A673 (cell line): ENCODE measurements at regions of chr15 and their contacts with region 1.

Region 1: DNA sequence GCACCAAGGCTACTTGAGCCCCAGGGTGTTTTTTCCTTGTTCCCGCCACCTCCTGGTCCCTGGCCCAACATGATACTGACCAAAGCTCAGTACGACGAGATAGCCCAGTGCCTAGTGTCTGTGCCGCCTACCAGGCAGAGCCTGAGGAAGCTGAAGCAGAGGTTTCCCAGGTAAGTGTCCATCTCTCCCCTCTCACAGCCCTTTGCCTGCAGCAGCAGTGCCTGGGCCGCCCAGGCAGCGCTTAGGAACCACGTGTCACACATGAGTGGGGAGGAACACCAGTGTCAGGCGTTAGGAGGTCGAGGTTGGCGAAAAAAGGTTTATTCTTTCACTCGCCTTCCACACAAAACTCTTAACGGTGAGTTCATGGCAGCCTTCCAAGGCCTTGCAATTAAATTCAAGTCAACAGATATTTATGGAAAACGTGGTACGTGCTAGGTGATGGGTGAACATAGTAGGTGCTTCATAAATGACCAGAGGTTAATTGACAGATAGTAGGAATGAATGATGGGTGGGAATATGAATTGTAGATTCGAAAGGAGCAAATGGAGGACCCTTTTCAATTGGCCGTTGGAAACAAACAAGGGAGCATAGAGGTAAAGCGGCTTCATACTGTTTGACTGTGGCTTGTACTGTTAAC is 486 bp downstream of the CDIN1 start:
- DNase-seq: no peak
- H3K4me3 ChIP-seq: peak overlapping the region; percentile 66
- H3K27ac ChIP-seq: peak overlapping the region; percentile 82
- H3K4me1 ChIP-seq: no peaks in the 10 kb centered on the region
- H3K27me3 ChIP-seq: no peaks in the 10 kb centered on the region
- CTCF ChIP-seq: no peak

Region 2: DNA sequence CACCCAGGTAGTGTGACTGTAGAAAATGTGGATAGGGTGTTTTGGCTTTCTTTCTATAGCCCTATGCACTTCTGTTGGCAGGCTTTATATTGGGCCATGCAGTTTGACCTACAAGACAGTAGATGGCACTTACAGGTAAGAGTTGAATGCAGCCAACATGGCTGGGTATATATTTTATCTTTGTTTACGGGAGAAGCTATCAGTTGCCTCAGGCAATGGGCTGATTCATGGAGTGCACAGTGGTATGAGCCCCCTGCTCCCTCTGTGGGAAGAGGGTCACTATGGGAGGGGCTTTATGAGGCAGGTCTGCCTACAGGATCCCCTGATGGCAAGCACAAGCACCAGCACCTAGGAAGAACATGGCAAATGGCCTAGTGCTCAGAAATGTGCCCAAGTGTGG is 301.7 kb before region 1 on chr15:
- CTCF ChIA-PET with region 1: no interaction called
- POLR2A ChIA-PET with region 1: no interaction called
- intact Hi-C with region 1: loop called (anchors 10 kb)
- DNase-seq: peak; percentile 23
- H3K4me3 ChIP-seq: no peak overlapping the region
- H3K27ac ChIP-seq: no peak overlapping the region
- H3K4me1 ChIP-seq: no peaks in the 10 kb centered on the region
- H3K27me3 ChIP-seq: peaks cover 11% of the 10 kb centered on the region
- CTCF ChIP-seq: peak; percentile 43; the same call in 1 of the 2 replicates

Region 3: DNA sequence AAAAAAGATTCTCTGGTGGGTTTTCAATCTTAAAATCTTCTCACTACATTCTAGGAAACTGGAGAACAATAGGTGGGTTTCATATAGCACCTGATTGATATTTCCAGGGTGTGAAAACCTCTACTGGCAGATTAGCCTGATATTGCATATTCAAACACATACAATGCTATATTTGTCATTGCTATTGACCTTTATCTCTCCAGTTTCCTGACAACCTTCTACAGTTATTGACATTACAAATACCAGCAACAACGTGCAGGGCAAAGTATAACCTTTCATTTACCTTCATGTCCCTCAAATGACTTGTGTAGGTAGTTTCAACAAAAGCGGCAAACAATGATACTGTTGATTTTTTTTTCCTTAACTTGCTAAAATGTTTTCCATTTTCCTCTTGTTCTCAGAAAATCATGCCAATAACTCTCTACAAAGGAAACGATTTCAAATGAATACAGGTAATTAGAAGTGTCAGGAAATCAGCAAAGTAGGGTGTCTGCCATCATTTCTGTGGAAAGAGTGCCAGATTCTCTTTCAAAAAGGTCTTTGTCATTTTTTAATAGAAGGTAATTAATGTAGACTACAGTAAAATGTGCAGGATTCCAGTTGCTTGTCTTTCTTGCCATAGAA is 73.1 kb before region 1 on chr15:
- CTCF ChIA-PET with region 1: no interaction called
- POLR2A ChIA-PET with region 1: no interaction called
- intact Hi-C with region 1: no loop called
- DNase-seq: no peak
- H3K4me3 ChIP-seq: no peak overlapping the region
- H3K27ac ChIP-seq: no peak overlapping the region
- H3K4me1 ChIP-seq: no peaks in the 10 kb centered on the region
- H3K27me3 ChIP-seq: peaks cover 5% of the 10 kb centered on the region
- CTCF ChIP-seq: no peak